A549 (cell line): ENCODE measurements at regions of chr5 and their contacts with region 1.

Region 1: DNA sequence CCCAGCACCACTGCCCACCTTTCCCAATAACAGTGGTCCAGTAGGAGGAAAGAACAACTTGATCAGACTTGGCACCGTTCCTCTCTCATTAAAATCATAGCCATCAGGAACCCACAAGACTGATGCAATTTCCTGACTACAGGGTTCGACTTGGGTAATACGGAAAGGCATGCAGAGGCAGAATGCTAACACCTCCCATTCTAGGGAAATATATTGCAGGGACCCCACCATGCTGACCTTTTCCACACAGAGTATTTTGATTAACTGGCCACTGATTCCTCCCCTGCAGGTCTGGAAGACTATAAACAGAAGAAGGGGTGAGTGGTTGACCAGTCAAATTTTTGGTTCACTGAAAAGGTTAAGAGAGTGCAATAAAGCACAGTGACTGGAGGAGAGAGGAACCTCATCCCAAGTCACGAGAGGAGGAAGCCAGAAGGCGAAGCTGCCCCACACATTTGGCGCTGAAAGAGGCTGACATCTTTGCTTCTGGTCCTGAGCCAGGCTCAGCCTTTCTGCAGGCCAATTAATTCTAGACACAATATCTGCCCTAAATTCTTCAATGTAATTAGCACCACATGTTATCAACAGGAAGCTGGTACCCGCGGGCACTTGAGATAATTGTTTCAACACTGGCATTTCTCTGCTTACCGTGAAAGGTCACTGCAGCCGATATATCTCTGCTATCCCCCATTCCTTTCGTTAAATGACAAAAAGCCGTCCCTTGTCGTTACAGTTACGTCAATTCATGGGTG is 64.7 kb upstream of the SPOCK1 start:
- DNase-seq: no peak
- ATAC-seq: no peak
- H3K4me3 ChIP-seq: no peak overlapping the region
- H3K27ac ChIP-seq: no peak overlapping the region
- H3K4me1 ChIP-seq: no peaks in the 10 kb centered on the region
- CTCF ChIP-seq: no peak
- EP300 ChIP-seq: no peak
- POLR2A ChIP-seq: no peak
- RAD21 ChIP-seq: no peak

Region 2: DNA sequence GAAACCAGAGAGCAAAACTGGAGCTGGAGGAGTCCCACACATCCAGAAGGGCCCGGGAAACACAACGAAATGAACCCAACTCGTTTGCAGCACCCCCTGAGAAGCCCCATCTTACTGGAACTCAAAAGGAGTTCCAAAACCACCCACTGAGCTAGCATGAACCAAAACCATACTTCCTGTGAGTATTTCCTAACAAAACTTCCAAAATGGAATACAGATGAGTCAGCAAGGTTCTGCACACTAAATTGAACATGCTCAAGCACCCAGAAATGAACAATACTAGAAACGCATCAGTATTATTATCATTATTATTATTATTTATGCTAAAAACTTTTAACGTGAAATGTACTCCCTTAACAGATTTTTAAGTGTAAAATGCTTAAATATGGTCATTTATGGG is 56.7 kb before region 1 on chr5:
- CTCF ChIA-PET with region 1: no interaction called
- POLR2A ChIA-PET with region 1: interaction called, 12 read pairs
- DNase-seq: no peak
- ATAC-seq: no peak
- H3K4me3 ChIP-seq: no peak overlapping the region
- H3K27ac ChIP-seq: no peak overlapping the region
- H3K4me1 ChIP-seq: no peaks in the 10 kb centered on the region
- CTCF ChIP-seq: no peak
- EP300 ChIP-seq: no peak
- POLR2A ChIP-seq: no peak
- RAD21 ChIP-seq: no peak